ENCODE measurements at regions of chr6 and their contacts with region 1.

Region 1: GRCh38 chr6:45001663-45002062 is 326.5 kb upstream of the RUNX2 start:
- DNase-seq: peak; percentile 24
- H3K4me3 Mint-ChIP-seq: peak overlapping the region; percentile 5
- H3K27ac Mint-ChIP-seq: peak overlapping the region; percentile 93
- H3K4me1 Mint-ChIP-seq: peaks cover 39% of the 10 kb centered on the region
- H3K27me3 Mint-ChIP-seq: no peaks in the 10 kb centered on the region

Region 2: DNA sequence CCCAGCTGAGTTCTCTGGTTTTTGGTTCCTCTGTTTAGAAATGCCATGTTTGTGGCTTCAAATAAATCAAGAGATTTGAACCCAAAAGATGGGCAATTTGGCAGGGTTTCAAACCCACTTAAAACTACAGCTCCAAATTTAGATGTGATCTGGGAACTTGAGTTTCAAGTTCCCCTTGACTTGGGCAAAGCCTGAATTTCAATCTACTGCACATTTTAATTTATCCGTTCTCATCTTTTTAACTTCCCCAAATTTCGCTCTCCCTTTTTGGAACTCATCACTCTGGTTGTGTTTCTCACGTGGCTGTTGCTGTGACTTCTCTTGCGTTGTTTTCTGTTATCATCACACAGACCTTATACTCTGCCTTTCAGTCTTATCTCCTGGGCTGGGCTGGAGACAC is 383.3 kb before region 1 on chr6:
- intact Hi-C with region 1: no loop called
- DNase-seq: no peak
- H3K4me3 Mint-ChIP-seq: no peak overlapping the region
- H3K27ac Mint-ChIP-seq: no peak overlapping the region
- H3K4me1 Mint-ChIP-seq: peaks cover 3% of the 10 kb centered on the region
- H3K27me3 Mint-ChIP-seq: peaks cover 5% of the 10 kb centered on the region

Region 3: GRCh38 chr6:44932651-44933091 is 69.0 kb before region 1 on chr6:
- intact Hi-C with region 1: loop called (anchors 2 kb)
- DNase-seq: no peak
- H3K4me3 Mint-ChIP-seq: peak overlapping the region; percentile 78
- H3K27ac Mint-ChIP-seq: peak overlapping the region; percentile 93
- H3K4me1 Mint-ChIP-seq: peaks cover 48% of the 10 kb centered on the region
- H3K27me3 Mint-ChIP-seq: no peaks in the 10 kb centered on the region

Region 4: GRCh38 chr6:44966449-44967092 is 35.1 kb before region 1 on chr6:
- intact Hi-C with region 1: loop called (anchors 5 kb)
- DNase-seq: no peak
- H3K4me3 Mint-ChIP-seq: no peak overlapping the region
- H3K27ac Mint-ChIP-seq: peak overlapping the region; percentile 2
- H3K4me1 Mint-ChIP-seq: peaks cover 36% of the 10 kb centered on the region
- H3K27me3 Mint-ChIP-seq: no peaks in the 10 kb centered on the region

Region 5: GRCh38 chr6:44976719-44977641 is 24.7 kb before region 1 on chr6:
- intact Hi-C with region 1: loop called (anchors 1 kb)
- DNase-seq: no peak
- H3K4me3 Mint-ChIP-seq: no peak overlapping the region
- H3K27ac Mint-ChIP-seq: peak overlapping the region; percentile 84
- H3K4me1 Mint-ChIP-seq: peaks cover 44% of the 10 kb centered on the region
- H3K27me3 Mint-ChIP-seq: no peaks in the 10 kb centered on the region

Region 6: DNA sequence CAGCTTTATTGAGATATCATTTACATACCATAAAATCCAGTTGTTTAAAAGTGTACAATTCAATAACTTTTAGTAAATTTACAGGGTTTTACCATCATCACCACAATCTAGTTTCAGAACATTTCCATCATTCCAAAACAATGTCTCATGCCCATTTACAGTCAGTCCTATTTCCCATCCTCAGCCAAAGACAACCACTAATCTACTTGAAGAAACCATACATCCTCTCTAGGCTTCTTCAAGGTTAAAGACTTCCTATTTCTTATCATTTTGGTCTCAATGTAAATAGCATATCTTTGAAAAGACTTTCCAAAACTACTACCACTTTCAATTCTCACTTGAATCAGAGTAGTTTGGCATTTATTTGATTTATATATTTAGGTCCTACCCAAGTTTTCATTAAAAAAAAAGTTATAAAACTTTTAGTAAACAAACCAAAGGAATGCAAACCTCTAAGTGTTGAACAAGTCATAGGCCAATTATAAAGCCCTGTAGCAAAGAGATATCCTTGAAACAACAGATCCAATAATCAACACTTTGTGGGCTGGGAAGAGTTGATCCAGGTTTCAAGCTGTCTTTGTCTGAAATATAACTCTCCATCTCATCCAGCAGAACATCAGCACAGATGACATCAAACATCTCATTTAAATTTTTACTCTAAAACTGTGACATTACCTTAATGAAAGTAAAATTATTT is 115.2 kb after region 1 on chr6:
- intact Hi-C with region 1: loop called (anchors 1 kb)
- DNase-seq: no peak
- H3K4me3 Mint-ChIP-seq: no peak overlapping the region
- H3K27ac Mint-ChIP-seq: peak overlapping the region; percentile 34
- H3K4me1 Mint-ChIP-seq: peaks cover 27% of the 10 kb centered on the region
- H3K27me3 Mint-ChIP-seq: no peaks in the 10 kb centered on the region

Region 7: DNA sequence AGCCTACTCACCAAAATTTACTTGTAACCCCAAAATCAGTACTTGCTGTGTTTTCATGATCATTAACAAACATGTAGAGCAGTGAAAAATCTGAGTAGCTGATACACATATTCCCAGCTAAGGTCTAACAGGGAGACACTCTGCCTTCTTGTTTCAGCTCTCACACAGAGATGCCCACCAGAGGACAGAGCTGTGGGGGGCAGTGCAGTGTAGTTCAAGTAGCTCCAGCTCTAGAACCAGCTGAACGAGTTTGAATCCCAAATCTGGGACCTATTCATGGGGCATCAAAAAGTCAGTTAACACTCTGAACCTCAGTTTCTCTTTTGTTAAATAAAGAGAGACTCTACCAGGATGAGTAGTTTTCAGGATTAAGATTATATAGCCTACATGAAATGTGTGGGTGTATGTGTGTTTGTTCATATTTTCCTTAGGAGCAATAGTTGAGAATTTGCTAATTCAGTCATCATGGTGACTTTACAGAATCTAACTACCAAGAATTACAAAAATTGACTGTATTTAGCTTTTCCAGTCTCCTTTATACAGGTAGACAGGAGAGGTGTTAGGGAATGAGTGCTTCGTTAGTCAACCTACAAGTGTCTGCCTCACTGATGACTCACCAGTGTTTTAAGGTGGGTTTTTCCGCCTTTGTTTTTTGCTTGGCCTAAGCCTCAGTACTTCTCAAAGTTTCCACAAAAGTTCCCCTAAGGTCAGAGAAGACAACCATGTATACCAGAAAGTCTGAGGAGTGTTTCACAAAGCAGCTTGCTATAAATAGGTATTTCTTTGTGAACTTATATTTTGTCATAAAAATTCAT is 162.5 kb after region 1 on chr6:
- intact Hi-C with region 1: loop called (anchors 1 kb)
- DNase-seq: no peak
- H3K4me3 Mint-ChIP-seq: no peak overlapping the region
- H3K27ac Mint-ChIP-seq: peak overlapping the region; percentile 81
- H3K4me1 Mint-ChIP-seq: peaks cover 46% of the 10 kb centered on the region
- H3K27me3 Mint-ChIP-seq: no peaks in the 10 kb centered on the region

Measured in activated T-helper 2 cell treated with anti-CD3 and anti-CD28 coated beads, Interferon-gamma antibody, Interleukin-2, Interleukin-4, amounts not matched to agents 10 μg/mL and 5 μg/mL and 100 μg/mL, durations not matched to agents 14 hours and 24 hours and 36 hours (primary cell).